ACHN (cell line): ENCODE measurements at regions of chr5 and their contacts with region 1.

Region 1: DNA sequence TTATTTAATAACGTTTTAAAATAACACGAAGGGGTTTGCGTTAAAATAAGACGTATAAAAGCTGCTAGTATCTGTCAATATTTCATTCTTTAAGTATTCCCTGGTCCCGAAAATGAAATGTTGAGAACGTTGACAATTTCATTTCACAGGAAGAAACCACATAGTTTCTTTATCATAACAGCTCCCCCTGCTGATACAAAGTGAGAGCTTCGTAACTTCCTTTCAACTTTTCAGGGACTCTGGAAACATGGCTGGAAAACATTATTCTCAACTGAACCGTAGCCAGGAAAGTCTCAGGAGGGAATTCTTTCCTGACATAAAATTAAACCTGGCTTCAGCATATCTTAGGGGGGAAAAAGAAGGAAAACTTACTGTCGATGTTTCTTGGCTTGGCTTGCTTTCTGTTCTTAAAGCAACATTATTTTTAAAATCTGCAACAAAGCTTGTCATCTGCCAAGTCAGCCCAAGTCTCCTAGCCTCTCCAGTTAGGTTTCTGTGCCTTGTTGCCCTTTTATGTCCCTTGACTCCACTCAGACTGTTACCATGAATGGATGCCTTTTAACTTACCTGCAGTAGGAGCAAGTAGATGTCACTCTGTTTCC is 122.9 kb upstream of the DAB2 start:
- DNase-seq: peak; percentile 73

Region 2: DNA sequence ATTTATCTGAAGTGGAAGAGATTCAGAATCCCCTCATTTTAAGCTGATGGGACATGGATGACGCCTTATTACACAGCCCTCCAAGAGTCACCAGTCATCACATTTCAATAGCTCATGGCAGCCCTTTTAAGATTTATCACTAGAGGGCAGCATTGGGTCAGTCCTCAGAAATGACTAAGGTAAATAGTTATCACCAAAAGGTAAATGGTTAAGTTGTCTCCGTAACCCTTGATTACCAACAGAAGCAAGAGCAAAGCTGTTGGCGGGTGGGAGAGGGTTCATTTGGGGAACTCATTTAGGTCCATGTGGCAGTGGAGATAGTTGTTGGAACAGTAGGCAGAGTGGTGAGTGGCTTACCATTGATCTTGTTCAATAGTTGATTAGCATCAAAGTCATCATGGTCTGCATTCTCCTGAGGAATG is 171.3 kb before region 1 on chr5:
- in situ Hi-C with region 1: loop called (anchors 25 kb)
- DNase-seq: peak; percentile 67